ENCODE measurements at regions of chr22 and their contacts with region 1.

Region 1: GRCh38 chr22:33579448-33580093 is 340.7 kb downstream of the LARGE1 start:
- DNase-seq: peak; percentile 9
- H3K4me3 Mint-ChIP-seq: no peak overlapping the region
- H3K27ac Mint-ChIP-seq: no peak overlapping the region
- H3K4me1 Mint-ChIP-seq: no peaks in the 10 kb centered on the region
- H3K27me3 Mint-ChIP-seq: no peaks in the 10 kb centered on the region
- CTCF ChIP-seq: peak; percentile 83

Region 2: GRCh38 chr22:33271390-33272161 is 308.0 kb before region 1 on chr22:
- CTCF ChIA-PET with region 1: no interaction called
- POLR2A ChIA-PET with region 1: no interaction called
- intact Hi-C with region 1: no loop called
- DNase-seq: peak; percentile 62
- H3K4me3 Mint-ChIP-seq: no peak overlapping the region
- H3K27ac Mint-ChIP-seq: no peak overlapping the region
- H3K4me1 Mint-ChIP-seq: peaks cover 15% of the 10 kb centered on the region
- H3K27me3 Mint-ChIP-seq: no peaks in the 10 kb centered on the region
- CTCF ChIP-seq: no peak

Region 3: GRCh38 chr22:33519071-33519973 is 60.2 kb before region 1 on chr22:
- CTCF ChIA-PET with region 1: interaction called, 18 read pairs
- POLR2A ChIA-PET with region 1: no interaction called
- intact Hi-C with region 1: loop called (anchors 1 kb)
- DNase-seq: no peak
- H3K4me3 Mint-ChIP-seq: no peak overlapping the region
- H3K27ac Mint-ChIP-seq: no peak overlapping the region
- H3K4me1 Mint-ChIP-seq: no peaks in the 10 kb centered on the region
- H3K27me3 Mint-ChIP-seq: no peaks in the 10 kb centered on the region
- CTCF ChIP-seq: peak; percentile 60

Region 4: GRCh38 chr22:33565580-33565995 is 14.0 kb before region 1 on chr22:
- CTCF ChIA-PET with region 1: interaction called, 22 read pairs
- POLR2A ChIA-PET with region 1: interaction called, 4 read pairs
- intact Hi-C with region 1: no loop called
- DNase-seq: no peak
- H3K4me3 Mint-ChIP-seq: no peak overlapping the region
- H3K27ac Mint-ChIP-seq: no peak overlapping the region
- H3K4me1 Mint-ChIP-seq: no peaks in the 10 kb centered on the region
- H3K27me3 Mint-ChIP-seq: no peaks in the 10 kb centered on the region
- CTCF ChIP-seq: no peak